ENCODE measurements at regions of chr19 and their contacts with region 1.

Region 1: DNA sequence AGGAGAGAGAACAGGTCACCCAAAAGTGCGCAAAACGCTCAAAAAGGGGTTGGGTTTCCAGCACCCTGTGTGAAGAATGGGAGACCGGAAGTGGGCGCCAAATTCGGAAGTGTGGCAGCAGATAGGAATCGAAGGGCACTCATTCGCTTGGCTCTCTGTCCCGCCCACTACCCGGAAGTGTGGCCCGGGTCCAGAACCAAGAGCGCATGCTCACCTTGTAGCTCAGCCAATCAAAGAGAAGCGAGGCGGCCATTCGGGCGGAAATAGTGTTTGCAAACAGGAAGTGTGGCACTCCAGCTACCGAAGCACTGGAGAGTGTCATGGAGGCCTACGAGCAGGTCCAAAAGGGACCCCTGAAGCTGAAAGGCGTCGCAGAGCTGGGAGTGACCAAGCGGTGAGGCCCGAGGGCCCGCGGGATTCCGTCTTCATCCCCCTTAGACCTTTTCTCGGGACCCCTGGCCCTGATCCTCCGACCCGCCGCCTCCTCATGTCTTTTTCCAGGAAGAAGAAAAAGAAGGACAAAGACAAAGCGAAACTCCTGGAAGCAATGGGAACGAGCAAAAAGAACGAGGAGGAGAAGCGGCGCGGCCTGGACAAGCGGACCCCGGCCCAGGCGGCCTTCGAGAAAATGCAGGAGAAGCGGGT is at the start of gene FAM32A:
- DNase-seq: peak; percentile 99
- H3K4me3 ChIP-seq: peak within 1 kb of the TSS; percentile 84 to 96 (median 84)
- H3K27ac ChIP-seq: peak within 1 kb of the TSS; percentile 76
- H3K4me1 ChIP-seq: peaks cover 10% of the 10 kb centered on the region
- H3K27me3 ChIP-seq: no peaks in the 10 kb centered on the region
- CTCF ChIP-seq: peak in 1 of 2 donors; percentile 14
- POLR2A ChIP-seq: peak; percentile 79
- total RNA-seq, gene FAM32A: 76.3 and 82.8 TPM in 2 replicates

Region 2: GRCh38 chr19:15101479-15102082 is 1083.7 kb before region 1 on chr19:
- CTCF ChIA-PET with region 1: no interaction called
- POLR2A ChIA-PET with region 1: no interaction called
- dilution Hi-C with region 1: no loop called
- intact Hi-C with region 1: loop called (anchors 10 kb)
- DNase-seq: peak; percentile 75
- H3K4me3 ChIP-seq: no peak overlapping the region
- H3K27ac ChIP-seq: no peak overlapping the region
- H3K4me1 ChIP-seq: peaks cover 3% of the 10 kb centered on the region
- H3K27me3 ChIP-seq: no peaks in the 10 kb centered on the region
- CTCF ChIP-seq: peak; percentile 79 to 85
- POLR2A ChIP-seq: no peak

Region 3: GRCh38 chr19:15629003-15629880 is 556.0 kb before region 1 on chr19:
- CTCF ChIA-PET with region 1: interaction called, 17 read pairs
- POLR2A ChIA-PET with region 1: no interaction called
- dilution Hi-C with region 1: no loop called
- intact Hi-C with region 1: no loop called
- DNase-seq: peak; percentile 40
- H3K4me3 ChIP-seq: no peak overlapping the region
- H3K27ac ChIP-seq: no peak overlapping the region
- H3K4me1 ChIP-seq: no peaks in the 10 kb centered on the region
- H3K27me3 ChIP-seq: no peaks in the 10 kb centered on the region
- CTCF ChIP-seq: peak; percentile 83
- POLR2A ChIP-seq: no peak

Region 4: GRCh38 chr19:16041299-16041990 is 143.8 kb before region 1 on chr19:
- CTCF ChIA-PET with region 1: interaction called, 70 read pairs
- POLR2A ChIA-PET with region 1: interaction called, 3 read pairs
- dilution Hi-C with region 1: no loop called
- intact Hi-C with region 1: loop called (anchors 1 kb)
- DNase-seq: peak; percentile 74
- H3K4me3 ChIP-seq: no peak overlapping the region
- H3K27ac ChIP-seq: no peak overlapping the region
- H3K4me1 ChIP-seq: peaks cover 12% of the 10 kb centered on the region
- H3K27me3 ChIP-seq: no peaks in the 10 kb centered on the region
- CTCF ChIP-seq: peak; percentile 91 to 95
- POLR2A ChIP-seq: no peak

Region 5: DNA sequence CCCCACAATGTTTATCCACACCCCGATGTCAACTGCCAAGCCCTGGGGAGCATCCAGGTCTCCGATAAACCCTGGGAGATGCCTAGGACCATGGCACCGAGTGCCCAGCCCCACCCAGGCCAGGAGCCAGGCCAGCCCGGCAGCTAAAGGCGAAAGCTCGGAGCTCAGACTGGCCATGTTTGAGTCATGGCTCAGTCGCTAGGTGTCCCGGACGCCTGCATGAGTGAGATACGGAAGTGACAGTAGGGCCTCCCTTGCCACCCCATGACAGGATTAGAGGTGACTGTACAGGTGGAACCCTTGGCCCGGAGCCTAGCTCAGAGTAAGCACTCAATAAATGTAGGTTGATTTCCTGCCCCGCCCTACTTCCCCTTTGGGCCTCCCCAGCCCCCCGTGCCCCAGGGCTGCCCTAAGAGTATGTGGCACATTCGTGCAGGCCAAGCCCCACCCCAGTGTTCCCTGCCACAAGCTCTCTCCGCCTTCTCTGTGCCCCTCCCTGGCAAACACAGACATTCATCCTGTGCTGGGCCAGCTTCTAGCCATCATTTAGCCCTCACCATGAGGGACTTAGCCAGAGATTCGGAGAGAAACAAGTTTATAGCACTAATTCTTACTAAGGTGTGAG is 114.8 kb before region 1 on chr19:
- CTCF ChIA-PET with region 1: interaction called, 5 read pairs
- POLR2A ChIA-PET with region 1: no interaction called
- dilution Hi-C with region 1: no loop called
- intact Hi-C with region 1: loop called (anchors 1 kb)
- DNase-seq: peak; percentile 81
- H3K4me3 ChIP-seq: peak overlapping the region in 1 of 3 experiments; percentile 3
- H3K27ac ChIP-seq: peak overlapping the region; percentile 86
- H3K4me1 ChIP-seq: peaks cover 49% of the 10 kb centered on the region
- H3K27me3 ChIP-seq: no peaks in the 10 kb centered on the region
- CTCF ChIP-seq: no peak
- POLR2A ChIP-seq: peak; percentile 65

Region 6: DNA sequence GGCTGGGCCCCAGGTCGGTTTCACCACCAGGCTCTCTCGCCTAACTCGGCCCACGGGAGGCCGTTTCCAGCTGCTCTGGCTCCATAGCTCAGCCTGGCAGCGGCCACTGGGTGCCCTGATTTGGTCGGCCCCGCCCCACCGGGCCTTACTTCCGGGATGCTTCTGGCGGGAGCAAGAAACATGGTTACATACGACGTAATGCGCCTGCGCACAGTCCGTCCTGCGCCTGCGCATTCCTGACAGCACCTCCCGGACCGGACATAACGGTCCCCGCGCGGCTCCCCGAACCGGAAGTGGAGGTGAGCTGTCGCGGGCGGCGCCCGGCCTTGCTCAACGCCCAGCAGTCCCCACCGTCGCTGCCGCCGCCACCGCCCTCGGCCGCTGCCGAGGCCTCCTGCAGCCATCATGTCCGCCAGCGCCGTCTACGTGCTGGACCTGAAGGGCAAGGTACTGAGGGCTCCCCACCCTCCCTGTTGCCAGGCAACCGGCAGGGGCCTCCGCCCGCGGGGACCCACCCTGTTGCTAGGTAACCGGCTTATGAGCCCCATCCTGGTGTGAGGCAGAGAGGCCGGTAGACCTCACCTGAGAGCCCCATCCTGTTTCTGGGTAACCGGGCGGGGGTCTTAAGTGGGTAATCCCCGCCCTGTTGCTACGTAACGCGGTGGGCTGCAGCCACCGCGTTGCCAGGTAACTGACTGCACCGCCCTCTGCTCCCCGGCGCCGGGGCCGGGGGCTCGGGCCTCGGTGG is 12.6 kb after region 1 on chr19 and contains the start of gene AP1M1:
- CTCF ChIA-PET with region 1: interaction called, 5 read pairs
- POLR2A ChIA-PET with region 1: interaction called, 12 read pairs
- dilution Hi-C with region 1: no loop called
- intact Hi-C with region 1: loop called (anchors 1 kb)
- DNase-seq: peak; percentile 98
- H3K4me3 ChIP-seq: peak within 1 kb of the TSS; percentile 95 to 96 (median 95)
- H3K27ac ChIP-seq: peak within 1 kb of the TSS; percentile 81
- H3K4me1 ChIP-seq: peaks cover 21% of the 10 kb centered on the region
- H3K27me3 ChIP-seq: no peaks in the 10 kb centered on the region
- CTCF ChIP-seq: no peak
- POLR2A ChIP-seq: peak; percentile 88
- total RNA-seq, gene AP1M1: 114 and 129 TPM in 2 replicates

Measured in endothelial cell of umbilical vein (primary cell).